PC-9 (cell line): ENCODE measurements at regions of chr2 and their contacts with region 1.

Region 1: DNA sequence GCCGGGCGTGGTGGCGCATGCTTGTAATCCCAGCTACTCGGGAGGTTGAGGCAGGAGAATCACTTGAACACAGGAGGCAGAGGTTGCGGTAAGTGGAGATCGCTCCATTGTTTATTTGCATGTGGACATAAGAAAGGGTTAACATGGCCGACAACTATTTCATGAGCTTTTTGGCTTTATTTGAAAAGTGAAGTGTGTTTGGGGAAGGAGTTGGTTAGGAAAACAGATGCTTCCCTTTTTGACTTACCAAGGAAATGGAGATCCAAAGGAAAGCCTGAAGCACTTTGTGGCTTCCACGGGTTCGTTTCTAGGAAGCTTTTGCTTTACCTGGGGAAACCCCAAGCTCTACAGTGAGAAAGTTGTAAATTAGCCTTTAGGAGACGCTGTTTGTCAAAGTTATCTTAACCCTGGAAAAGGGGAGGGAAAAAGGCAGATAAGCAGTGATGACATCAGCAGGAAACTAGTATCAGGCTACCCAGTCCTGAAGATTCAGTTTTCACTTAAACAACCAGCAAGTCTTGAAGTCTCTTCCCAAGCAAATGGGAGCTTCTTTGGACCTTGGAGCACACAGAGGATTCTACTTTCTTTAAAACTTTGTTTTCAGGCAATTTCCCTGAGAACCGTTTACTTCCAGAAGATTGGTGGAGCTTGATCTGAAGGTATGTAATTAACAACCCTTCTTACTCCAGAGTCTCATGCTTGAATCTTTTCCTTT is at the start of gene CASP10:
- DNase-seq: peak; percentile 44 to 80
- H3K4me3 ChIP-seq: peak within 1 kb of the TSS; percentile 57
- H3K27ac ChIP-seq: peak within 1 kb of the TSS; percentile 31
- H3K4me1 ChIP-seq: 0 out of 2 replicates have a peak, but pooled peaks cover 17% of the 10 kb centered on the region
- H3K27me3 ChIP-seq: no peaks in the 10 kb centered on the region
- CTCF ChIP-seq: peak; percentile 64
- total RNA-seq, gene CASP10: 15.2 and 16.9 TPM in 2 replicates

Region 2: DNA sequence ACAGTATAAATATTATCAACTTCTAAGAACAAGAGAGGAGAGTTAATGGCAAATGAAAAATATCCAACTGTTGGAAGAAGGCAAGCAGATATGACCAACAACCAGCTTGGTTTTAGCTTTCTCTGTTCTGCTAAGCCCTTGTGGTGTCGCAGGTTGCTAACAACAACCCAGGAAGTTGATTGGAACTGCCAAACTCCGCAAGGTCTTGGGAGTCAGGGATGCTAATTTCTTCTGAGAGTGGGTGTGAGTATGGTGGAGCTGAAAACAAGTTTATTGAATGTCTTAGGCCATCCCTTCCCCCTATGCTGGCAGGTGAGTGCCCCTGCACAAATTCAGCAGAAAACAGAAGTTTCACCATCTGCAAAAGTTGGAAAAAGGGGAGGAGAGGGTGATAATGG is 353.6 kb before region 1 on chr2:
- CTCF ChIA-PET with region 1: no interaction called
- POLR2A ChIA-PET with region 1: no interaction called
- intact Hi-C with region 1: no loop called
- DNase-seq: no peak
- H3K4me3 ChIP-seq: no peak overlapping the region
- H3K27ac ChIP-seq: no peak overlapping the region
- H3K4me1 ChIP-seq: no peaks in the 10 kb centered on the region
- H3K27me3 ChIP-seq: no peaks in the 10 kb centered on the region
- CTCF ChIP-seq: no peak

Region 3: DNA sequence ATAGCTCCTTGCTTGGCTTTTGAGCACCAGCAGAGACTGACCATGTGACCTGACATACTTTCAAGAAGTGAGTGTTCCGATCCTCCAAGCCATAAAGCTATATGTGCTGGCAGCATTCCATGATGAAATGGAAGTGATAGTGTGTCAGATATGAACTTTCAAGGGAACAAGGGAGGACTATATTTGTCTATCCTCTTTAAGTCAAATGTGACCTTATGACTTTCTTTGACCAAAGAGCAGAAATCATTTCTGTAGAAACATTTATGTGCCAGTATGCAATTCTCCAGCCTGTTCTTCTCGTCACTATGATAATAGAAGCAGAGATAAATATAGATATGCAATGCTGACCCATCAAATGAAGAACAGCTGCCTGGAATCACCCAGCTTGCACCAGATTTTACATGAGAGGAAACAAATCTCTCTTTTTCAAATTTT is 125.7 kb before region 1 on chr2:
- CTCF ChIA-PET with region 1: no interaction called
- POLR2A ChIA-PET with region 1: no interaction called
- intact Hi-C with region 1: no loop called
- DNase-seq: no peak
- H3K4me3 ChIP-seq: no peak overlapping the region
- H3K27ac ChIP-seq: no peak overlapping the region
- H3K4me1 ChIP-seq: no peaks in the 10 kb centered on the region
- H3K27me3 ChIP-seq: no peaks in the 10 kb centered on the region
- CTCF ChIP-seq: no peak

Region 4: GRCh38 chr2:201108341-201108740 is 74.5 kb before region 1 on chr2:
- CTCF ChIA-PET with region 1: no interaction called
- POLR2A ChIA-PET with region 1: no interaction called
- intact Hi-C with region 1: no loop called
- DNase-seq: no peak
- H3K4me3 ChIP-seq: no peak overlapping the region
- H3K27ac ChIP-seq: no peak overlapping the region
- H3K4me1 ChIP-seq: no peaks in the 10 kb centered on the region
- H3K27me3 ChIP-seq: no peaks in the 10 kb centered on the region
- CTCF ChIP-seq: no peak

Region 5: DNA sequence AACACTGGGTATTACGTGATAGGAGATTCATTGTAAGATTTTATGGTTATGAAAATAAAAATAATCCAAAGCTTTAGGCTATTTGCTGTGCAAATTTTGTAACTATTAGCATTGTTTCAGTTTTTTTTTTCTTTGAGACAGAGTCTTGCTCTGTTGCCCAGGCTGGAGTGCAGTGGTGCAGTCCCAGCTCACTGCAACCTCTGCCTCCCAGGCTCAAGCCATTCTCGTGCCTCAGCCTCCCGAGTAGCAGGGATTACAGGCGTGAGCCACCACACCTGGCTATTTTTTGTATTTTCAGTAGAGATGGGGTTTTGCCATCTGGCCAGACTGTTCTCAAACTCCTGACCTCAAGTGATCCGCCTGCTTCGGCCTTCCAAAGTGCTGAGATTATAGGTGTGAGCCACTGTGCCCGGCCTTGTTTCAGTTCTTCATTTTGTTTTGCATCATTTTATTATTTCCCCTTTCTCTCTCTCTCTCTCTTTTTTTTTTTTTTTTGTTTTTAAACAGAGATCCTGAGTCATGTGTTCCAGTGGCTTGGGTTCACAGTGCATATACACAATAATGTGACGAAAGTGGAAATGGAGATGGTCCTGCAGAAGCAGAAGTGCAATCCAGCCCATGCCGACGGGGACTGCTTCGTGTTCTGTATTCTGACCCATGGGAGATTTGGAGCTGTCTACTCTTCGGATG is 25.9 kb after region 1 on chr2:
- CTCF ChIA-PET with region 1: no interaction called
- POLR2A ChIA-PET with region 1: no interaction called
- intact Hi-C with region 1: no loop called
- DNase-seq: no peak
- H3K4me3 ChIP-seq: no peak overlapping the region
- H3K27ac ChIP-seq: no peak overlapping the region
- H3K4me1 ChIP-seq: no peaks in the 10 kb centered on the region
- H3K27me3 ChIP-seq: no peaks in the 10 kb centered on the region
- CTCF ChIP-seq: no peak

Region 6: DNA sequence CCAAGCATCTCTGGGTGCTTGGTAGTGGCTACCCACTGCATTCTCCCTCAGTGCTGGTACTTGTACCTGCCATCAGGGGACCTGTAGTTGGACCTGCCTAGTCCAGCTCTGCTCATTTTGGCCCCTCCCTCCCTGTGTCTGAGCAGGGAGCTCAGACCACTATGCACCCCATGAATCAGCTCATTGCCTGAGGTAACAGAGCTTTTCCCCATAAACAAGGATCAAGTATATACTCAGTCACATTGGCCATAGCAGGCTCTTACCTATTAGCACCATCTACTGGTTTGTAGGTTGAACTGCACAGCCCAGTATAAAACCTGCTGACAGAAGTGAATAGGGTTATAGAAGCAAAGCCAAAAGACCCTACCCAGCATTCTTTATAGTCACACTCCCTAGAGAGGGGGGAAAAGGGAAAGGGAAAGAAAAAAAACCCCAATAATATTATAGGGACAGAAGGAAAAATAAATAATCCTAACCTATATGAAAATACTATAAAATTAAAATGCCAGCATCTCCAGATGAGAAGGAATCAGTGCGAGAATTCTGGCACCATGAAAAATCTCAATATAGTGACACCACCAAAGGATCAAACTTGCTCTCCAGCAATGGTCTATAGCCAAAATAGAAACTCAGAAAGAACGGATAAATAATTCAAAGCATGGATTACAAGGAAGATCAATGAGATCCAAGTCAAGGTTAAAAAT is 181.2 kb after region 1 on chr2:
- CTCF ChIA-PET with region 1: interaction called, 4 read pairs
- POLR2A ChIA-PET with region 1: no interaction called
- intact Hi-C with region 1: loop called (anchors 5 kb)
- DNase-seq: peak; percentile 10 to 57
- H3K4me3 ChIP-seq: no peak overlapping the region
- H3K27ac ChIP-seq: no peak overlapping the region
- H3K4me1 ChIP-seq: peaks cover 4% of the 10 kb centered on the region; the same call in 1 of the 2 replicates
- H3K27me3 ChIP-seq: no peaks in the 10 kb centered on the region
- CTCF ChIP-seq: peak; percentile 91

Region 7: DNA sequence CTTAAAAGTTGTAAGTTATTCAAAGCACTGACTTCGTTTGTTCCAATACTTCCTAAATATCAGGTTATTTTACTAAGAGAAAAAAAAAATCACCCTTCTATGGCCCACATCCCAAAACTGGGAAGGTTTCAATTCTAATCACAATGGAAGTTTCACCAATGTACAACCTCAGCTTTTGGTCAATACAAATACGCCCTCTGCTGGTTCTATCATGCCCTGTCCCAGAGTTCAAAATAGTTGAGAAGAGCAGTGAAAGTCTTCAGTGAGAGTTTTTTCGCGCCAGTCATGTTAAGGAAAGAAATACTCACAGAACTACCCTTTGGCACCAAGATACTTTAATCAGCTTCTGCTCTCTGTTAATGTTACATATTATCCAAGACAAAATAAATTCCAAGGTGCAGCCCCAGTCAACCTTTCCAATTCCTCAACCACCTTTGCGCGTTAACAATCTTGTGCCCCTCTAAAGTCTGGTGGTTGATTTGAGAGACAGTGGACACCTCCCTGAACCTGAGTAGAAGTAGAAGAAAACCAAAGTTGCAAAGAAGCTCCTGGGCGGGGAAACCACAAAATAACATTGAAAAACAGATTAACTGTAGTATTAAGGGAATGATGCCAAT is 995.6 kb after region 1 on chr2:
- CTCF ChIA-PET with region 1: no interaction called
- POLR2A ChIA-PET with region 1: no interaction called
- intact Hi-C with region 1: loop called (anchors 5 kb)
- DNase-seq: peak in 1 of 2 experiments; percentile 29
- H3K4me3 ChIP-seq: no peak overlapping the region
- H3K27ac ChIP-seq: no peak overlapping the region
- H3K4me1 ChIP-seq: no peaks in the 10 kb centered on the region
- H3K27me3 ChIP-seq: no peaks in the 10 kb centered on the region
- CTCF ChIP-seq: peak; percentile 84